Activated naive CD4-positive, alpha-beta T cell treated with anti-CD3 and anti-CD28 coated beads for 36 hours (primary cell): ENCODE measurements at regions of chr1 and their contacts with region 1.

Region 1: DNA sequence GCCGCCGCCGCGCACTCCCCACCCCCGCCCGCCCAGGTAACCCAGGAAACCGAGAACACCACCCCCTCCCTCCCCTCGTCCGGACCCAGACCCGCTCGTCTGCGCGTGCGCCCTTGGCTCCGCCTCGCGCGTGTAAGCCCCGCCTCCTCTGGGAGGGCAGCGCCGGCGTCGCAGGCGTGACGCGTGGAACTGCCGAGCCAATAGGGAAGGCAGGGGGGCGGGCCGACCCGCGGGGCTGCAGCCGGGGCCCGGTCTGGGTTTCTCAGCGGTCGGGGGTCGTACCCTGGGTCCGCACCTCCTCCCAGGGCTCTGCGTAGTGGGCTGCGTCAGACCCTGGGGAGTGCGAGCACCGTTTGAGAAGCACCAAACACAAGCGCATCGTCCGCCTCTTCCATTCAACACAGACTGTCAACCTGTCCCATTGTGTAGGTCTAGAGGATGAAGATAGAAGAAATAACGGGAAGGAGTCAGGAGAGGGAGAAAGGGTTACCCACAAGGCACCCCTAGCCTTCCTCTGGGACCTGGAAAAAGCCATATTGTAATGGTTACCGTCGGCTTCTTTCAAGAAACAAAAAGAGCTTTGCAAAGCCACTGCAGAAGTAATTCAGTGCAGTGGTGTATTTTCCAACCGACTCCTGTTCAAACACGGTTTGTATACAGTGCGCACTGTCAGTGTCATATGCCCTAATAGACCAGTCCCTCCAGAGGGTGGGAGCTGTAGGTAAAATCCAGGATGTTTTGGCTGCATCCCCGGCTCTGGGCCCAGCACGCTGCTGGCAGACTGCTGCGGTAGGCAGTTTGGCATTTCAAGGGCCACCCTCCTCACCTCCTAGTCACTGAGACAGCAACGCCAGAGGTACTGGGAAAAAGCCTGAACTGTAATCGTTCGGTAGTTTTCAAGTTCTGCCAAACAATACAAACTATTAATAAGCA is 473 bp upstream of the LYST start:
- DNase-seq: peak; percentile 98
- H3K4me3 Mint-ChIP-seq: peak overlapping the region; percentile 91
- H3K27ac Mint-ChIP-seq: peak overlapping the region; percentile 94
- H3K4me1 Mint-ChIP-seq: peaks cover 45% of the 10 kb centered on the region
- H3K27me3 Mint-ChIP-seq: no peaks in the 10 kb centered on the region

Region 2: GRCh38 chr1:234610348-234611152 is 1256.6 kb before region 1 on chr1:
- CTCF ChIA-PET with region 1: no interaction called
- intact Hi-C with region 1: loop called (anchors 5 kb)
- DNase-seq: peak; percentile 91
- H3K4me3 Mint-ChIP-seq: peak overlapping the region; percentile 84
- H3K27ac Mint-ChIP-seq: peak overlapping the region; percentile 96
- H3K4me1 Mint-ChIP-seq: peaks cover 33% of the 10 kb centered on the region
- H3K27me3 Mint-ChIP-seq: no peaks in the 10 kb centered on the region

Region 3: GRCh38 chr1:235697508-235697907 is 169.7 kb before region 1 on chr1:
- CTCF ChIA-PET with region 1: no interaction called
- intact Hi-C with region 1: loop called (anchors 5 kb)
- DNase-seq: peak; percentile 37
- H3K4me3 Mint-ChIP-seq: no peak overlapping the region
- H3K27ac Mint-ChIP-seq: peak overlapping the region; percentile 82
- H3K4me1 Mint-ChIP-seq: peaks cover 18% of the 10 kb centered on the region
- H3K27me3 Mint-ChIP-seq: no peaks in the 10 kb centered on the region

Region 4: GRCh38 chr1:235888119-235888643 is 21.0 kb after region 1 on chr1:
- CTCF ChIA-PET with region 1: interaction called, 6 read pairs
- intact Hi-C with region 1: loop called (anchors 1 kb)
- DNase-seq: peak; percentile 61
- H3K4me3 Mint-ChIP-seq: peak overlapping the region; percentile 16
- H3K27ac Mint-ChIP-seq: peak overlapping the region; percentile 82
- H3K4me1 Mint-ChIP-seq: peaks cover 41% of the 10 kb centered on the region
- H3K27me3 Mint-ChIP-seq: no peaks in the 10 kb centered on the region

Region 5: DNA sequence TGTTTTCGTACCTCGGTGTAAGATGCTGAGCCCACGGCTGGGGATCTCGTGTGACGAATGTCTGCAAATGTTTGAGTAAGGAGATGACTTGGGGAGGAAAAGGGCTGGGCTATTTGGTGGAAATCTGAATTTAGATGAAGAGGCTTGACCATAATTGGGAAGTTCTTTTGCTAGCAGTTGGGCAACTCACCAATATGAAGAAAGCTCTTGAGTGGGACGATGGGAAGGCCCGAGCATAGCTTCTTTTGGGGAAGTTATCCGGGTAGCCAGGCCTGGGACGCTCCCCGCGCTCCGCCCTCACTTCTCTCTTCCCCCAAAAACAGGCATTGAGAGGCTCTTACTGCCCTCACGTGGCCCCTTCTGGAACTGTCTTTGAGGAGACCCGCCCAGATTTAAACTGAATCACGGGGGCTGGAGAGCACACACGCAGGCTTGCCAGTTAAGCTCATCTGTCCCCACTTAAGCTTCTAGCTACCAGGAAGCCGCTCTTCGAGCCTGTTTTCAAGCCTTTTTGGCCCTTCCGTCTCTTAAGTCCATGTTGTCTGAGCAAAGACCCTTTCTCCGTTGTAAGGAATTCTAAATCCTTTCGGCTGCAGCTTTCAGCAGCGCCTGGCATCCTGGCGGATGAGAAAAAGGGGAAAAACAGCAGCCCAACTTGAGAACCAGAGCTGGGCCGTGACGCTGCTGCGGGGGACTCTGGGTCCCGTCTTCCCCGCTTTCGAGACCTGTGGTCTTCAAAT is 104.6 kb after region 1 on chr1:
- CTCF ChIA-PET with region 1: interaction called, 62 read pairs
- intact Hi-C with region 1: loop called (anchors 1 kb)
- DNase-seq: peak; percentile 94
- H3K4me3 Mint-ChIP-seq: peak overlapping the region; percentile 67
- H3K27ac Mint-ChIP-seq: peak overlapping the region; percentile 76
- H3K4me1 Mint-ChIP-seq: peaks cover 14% of the 10 kb centered on the region
- H3K27me3 Mint-ChIP-seq: no peaks in the 10 kb centered on the region

Region 6: DNA sequence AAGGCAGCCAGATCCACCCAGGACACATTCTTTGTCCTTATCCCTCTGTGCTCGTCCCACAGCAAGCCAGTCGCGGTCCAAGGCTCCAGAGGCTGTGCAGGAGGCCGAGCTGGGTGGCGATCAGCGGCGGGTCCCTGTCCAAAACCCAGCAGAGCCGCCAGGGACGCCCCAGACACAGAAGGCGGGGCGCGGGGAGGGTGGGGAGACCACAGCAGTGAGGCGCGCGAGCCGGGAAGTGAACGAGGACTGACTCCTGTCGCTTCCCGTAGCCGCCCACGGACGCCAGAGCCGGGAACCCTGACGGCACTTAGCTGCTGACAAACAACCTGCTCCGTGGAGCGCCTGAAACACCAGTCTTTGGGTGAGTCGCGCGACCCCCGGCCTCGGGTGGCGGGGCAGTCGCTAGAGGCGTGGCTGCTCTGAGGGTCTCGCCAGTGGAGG is 656.5 kb after region 1 on chr1 and contains the start of gene LGALS8:
- CTCF ChIA-PET with region 1: no interaction called
- intact Hi-C with region 1: loop called (anchors 10 kb)
- DNase-seq: peak; percentile 91
- H3K4me3 Mint-ChIP-seq: peak within 1 kb of the TSS; percentile 96
- H3K27ac Mint-ChIP-seq: peak within 1 kb of the TSS; percentile 97
- H3K4me1 Mint-ChIP-seq: peaks cover 9% of the 10 kb centered on the region
- H3K27me3 Mint-ChIP-seq: no peaks in the 10 kb centered on the region
- total RNA-seq, gene LGALS8: 78.6 to 89.4 TPM